K562 (cell line): ENCODE measurements at regions of chr18 and their contacts with region 1.

Region 1: GRCh38 chr18:63339920-63340484 is 20.4 kb upstream of the BCL2 start:
- DNase-seq: peak in 2 of 4 experiments; percentile 14 to 53
- ATAC-seq: peak; percentile 71; the same call in 2 of the 3 replicates
- H3K4me3 ChIP-seq: no peak overlapping the region
- H3K27ac ChIP-seq: no peak overlapping the region
- H3K4me1 ChIP-seq: no peaks in the 10 kb centered on the region
- H3K27me3 ChIP-seq: no peaks in the 10 kb centered on the region
- CTCF ChIP-seq: peak in 2 of 3 experiments; percentile 41 to 48; a peak in 4 of 6 replicates
- EP300 ChIP-seq: no peak
- POLR2A ChIP-seq: no peak
- RAD21 ChIP-seq: peak; percentile 14 to 33; a peak in 1 of 4 replicates

Region 2: DNA sequence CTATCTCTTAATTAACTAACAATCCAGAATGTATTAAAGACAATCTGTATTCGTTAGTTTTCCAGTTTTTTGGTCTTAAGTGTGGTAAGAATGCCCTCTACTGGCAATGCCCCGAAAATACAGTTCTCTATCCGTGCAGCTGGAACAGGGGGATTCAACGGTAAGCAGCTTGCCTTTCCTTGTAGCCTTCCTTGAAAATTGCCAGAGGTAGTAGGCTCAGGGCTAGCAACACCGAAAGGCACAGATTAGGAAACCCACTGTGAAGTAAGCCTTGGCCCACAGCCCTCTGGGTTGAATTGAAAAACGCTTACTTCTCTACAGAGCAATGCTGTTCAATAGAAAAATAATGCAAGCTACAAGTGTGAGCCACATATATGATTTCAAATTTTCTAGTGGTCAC is 99.3 kb after region 1 on chr18:
- CTCF ChIA-PET with region 1: interaction called, 15 read pairs
- POLR2A ChIA-PET with region 1: no interaction called
- in situ Hi-C with region 1: loop called (anchors 10 kb)
- intact Hi-C with region 1: loop called (anchors 1 kb)
- DNase-seq: peak; percentile 43 to 52 (median 46)
- ATAC-seq: peak; percentile 81
- H3K4me3 ChIP-seq: no peak overlapping the region
- H3K27ac ChIP-seq: no peak overlapping the region
- H3K4me1 ChIP-seq: no peaks in the 10 kb centered on the region
- H3K27me3 ChIP-seq: peaks cover 0 to 4% of the 10 kb centered on the region in 2 experiments; a peak in 1 of 5 replicates
- CTCF ChIP-seq: peak; percentile 50 to 77 (median 66)
- EP300 ChIP-seq: no peak
- POLR2A ChIP-seq: no peak
- RAD21 ChIP-seq: peak; percentile 44 to 72

Region 3: DNA sequence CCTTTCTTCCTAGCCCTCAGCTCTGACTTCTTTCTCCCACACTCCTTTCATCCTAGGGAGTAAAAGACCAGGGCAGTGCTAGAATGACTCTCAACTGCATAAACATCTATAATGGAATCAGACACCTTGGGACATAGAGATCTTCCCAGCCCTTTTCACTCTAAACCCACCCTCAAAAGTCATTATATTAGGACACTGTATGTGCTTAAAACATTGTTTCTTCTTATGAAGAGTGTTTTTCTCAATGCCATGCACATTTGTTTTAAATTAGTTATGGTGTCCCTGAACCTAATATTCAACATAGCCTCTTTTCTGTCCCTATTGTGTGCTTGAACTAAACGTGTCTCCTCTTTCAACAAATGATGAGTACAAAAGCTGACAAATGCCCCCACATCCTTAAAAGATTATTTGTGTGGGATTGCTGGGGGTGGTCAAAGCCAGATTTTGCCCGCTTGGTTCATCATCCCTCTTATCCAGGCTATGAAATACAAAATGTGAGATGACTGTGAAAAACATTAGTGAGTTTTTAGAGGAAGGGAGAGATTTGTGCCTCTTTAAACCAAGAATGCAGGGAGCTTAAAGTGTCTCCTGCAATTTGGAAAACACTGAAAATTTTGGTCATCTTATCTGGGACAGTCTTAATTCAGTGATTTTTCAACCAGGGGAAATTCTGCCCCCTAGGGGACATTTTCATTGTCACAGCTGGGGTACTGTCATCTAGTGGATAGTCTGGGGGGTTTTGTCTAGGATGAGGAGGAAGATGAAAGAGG is 165.7 kb after region 1 on chr18:
- CTCF ChIA-PET with region 1: no interaction called
- POLR2A ChIA-PET with region 1: no interaction called
- in situ Hi-C with region 1: no loop called
- intact Hi-C with region 1: loop called (anchors 5 kb)
- DNase-seq: peak; percentile 34 to 43 (median 42)
- ATAC-seq: peak; percentile 84
- H3K4me3 ChIP-seq: no peak overlapping the region
- H3K27ac ChIP-seq: no peak overlapping the region
- H3K4me1 ChIP-seq: no peaks in the 10 kb centered on the region
- H3K27me3 ChIP-seq: no peaks in the 10 kb centered on the region
- CTCF ChIP-seq: peak; percentile 49 to 78 (median 64)
- EP300 ChIP-seq: no peak
- POLR2A ChIP-seq: no peak
- RAD21 ChIP-seq: peak; percentile 16 to 52; a peak in 2 of 4 replicates

Region 4: GRCh38 chr18:63848159-63848558 is 508.2 kb after region 1 on chr18:
- CTCF ChIA-PET with region 1: no interaction called
- POLR2A ChIA-PET with region 1: no interaction called
- in situ Hi-C with region 1: no loop called
- intact Hi-C with region 1: loop called (anchors 10 kb)
- DNase-seq: peak in 3 of 4 experiments; percentile 5 to 23 (median 6)
- ATAC-seq: no peak
- H3K4me3 ChIP-seq: no peak overlapping the region
- H3K27ac ChIP-seq: no peak overlapping the region
- H3K4me1 ChIP-seq: no peaks in the 10 kb centered on the region
- H3K27me3 ChIP-seq: no peaks in the 10 kb centered on the region
- CTCF ChIP-seq: peak in 2 of 3 experiments; percentile 32 to 33; a peak in 1 of 6 replicates
- EP300 ChIP-seq: no peak
- POLR2A ChIP-seq: no peak
- RAD21 ChIP-seq: peak in 1 of 2 experiments; percentile 39; a peak in 3 of 4 replicates